Posterior vena cava (tissue), 2 donors: ENCODE measurements at regions of chr4 and their contacts with region 1.

Region 1: DNA sequence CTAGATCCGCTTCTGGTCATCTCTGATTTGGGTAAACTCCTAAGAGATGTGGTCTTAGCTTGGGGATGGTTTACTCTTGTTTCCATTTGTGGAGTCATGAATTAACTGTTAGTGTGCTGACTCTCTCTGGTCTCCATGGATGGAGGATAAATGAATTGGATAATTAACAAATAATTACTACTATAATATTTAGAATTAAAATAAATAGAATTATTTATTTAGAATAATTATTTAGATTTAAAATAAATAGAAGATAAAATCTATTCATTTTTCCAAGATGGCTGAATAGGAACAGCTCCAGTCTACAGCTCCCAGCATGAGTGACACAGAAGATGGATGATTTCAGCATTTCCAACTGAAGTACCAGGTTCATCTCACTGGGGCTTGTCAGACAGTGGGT is 1587.4 kb upstream of the AGA start:
- DNase-seq: no peak

Region 2: DNA sequence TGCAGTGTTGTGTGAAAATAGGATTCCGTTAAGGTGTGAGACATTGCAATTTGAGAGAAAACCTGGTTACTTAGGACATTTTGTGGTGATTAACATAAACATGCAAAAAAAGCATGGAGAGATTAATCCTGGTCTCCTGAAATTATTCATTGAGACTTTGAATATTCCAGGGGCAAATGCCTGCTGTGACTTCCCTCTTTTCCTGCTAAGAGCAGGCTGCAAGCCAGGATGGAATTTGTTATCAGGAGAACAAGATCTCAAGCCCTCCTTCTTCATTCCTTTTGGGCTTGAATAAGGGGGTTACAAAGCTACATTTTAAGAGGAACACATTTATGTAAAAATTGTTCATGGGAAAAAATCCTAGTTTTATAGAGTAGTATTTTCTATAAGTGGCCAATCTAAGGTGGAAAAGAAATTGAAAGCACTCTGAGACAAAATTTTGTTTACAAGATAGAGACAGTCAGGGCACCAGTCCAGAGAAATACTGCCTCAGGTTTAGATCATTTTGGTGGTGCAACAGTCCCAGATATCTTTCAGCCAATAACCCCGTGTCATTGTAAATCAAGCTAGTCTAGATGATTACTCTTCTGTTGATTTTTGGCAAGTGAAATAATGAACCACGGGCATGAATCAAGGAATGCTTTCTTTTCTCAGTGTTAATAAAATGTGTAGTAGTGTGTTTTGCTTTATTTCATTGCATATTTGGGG is 59.1 kb before region 1 on chr4:
- intact Hi-C with region 1: loop called in 1 of 2 experiments (anchors 2 kb)
- DNase-seq: no peak